Right ventricle myocardium inferior (tissue), 1 donor: ENCODE measurements at regions of chr9 and their contacts with region 1.

Region 1: GRCh38 chr9:18255158-18255629 is 218.8 kb upstream of the ADAMTSL1 start:
- DNase-seq: peak; percentile 87
- ATAC-seq: peak; percentile 81

Region 2: GRCh38 chr9:18379073-18379811 is 124.0 kb after region 1 on chr9:
- intact Hi-C with region 1: no loop called
- DNase-seq: no peak
- ATAC-seq: no peak

Region 3: GRCh38 chr9:19028835-19029451 is 773.7 kb after region 1 on chr9:
- intact Hi-C with region 1: loop called (anchors 1 kb)
- DNase-seq: no peak
- ATAC-seq: peak; percentile 74